Breast epithelium (tissue), 4 donors: ENCODE measurements at regions of chr3 and their contacts with region 1.

Region 1: DNA sequence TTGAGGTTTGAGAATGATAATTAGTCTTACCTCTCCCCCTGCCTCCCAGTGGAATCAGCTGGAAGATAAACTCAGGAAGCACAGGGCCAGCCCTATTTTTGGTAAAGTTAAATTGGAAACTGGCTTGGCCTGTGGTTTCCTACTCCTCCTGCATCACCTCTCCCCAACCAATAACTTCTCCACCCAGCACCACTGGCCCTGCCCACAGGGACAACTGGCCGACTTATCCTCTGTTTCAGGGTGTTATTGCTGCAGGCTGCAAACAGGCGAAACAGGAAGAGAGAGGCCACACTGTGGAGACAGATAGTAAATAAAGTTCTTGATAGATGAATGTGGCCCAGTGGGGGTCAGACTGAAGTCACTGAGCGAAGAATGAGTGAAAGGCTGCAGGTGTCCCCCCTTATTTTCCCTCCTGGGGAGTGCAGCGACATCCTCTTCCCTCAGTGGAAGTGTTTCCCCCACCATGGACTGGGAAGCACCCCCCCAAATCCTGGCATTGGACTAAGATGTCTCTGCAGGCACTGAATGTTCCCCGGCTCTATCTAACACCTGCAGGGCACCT is 47.1 kb downstream of the PDIA5 start:
- DNase-seq: no peak
- H3K4me3 ChIP-seq: no peak overlapping the region
- H3K27ac ChIP-seq: no peak overlapping the region
- H3K4me1 ChIP-seq: no peaks in the 10 kb centered on the region
- H3K27me3 ChIP-seq: no peaks in the 10 kb centered on the region
- CTCF ChIP-seq: no peak
- POLR2A ChIP-seq: no peak

Region 2: GRCh38 chr3:123129092-123129491 is 15.1 kb after region 1 on chr3:
- intact Hi-C with region 1: loop called (anchors 1 kb)
- DNase-seq: no peak
- H3K4me3 ChIP-seq: no peak overlapping the region
- H3K27ac ChIP-seq: no peak overlapping the region
- H3K4me1 ChIP-seq: no peaks in the 10 kb centered on the region
- H3K27me3 ChIP-seq: no peaks in the 10 kb centered on the region
- CTCF ChIP-seq: no peak
- POLR2A ChIP-seq: no peak